ENCODE measurements at regions of chr9 and their contacts with region 1.

Region 1: DNA sequence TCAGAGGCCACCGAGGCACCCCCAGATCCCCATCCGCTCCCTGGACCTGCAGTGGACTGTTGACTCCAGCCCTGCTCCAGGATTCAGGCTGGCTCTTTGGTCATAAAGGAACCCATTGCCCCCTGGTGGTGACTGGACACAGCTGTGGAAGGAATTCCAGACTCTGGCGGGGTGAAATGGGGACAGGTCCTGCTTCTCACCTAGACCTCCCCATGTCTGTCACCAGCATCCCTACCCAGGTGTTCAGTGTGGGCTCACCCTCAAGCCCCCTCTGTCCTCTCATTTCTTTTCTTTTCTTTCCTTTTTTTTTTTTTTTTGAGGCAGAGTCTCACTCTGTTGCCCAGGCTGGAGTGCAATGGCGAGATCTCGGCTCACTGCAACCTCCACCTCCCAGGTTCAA is 25.5 kb upstream of the STXBP1 start:
- DNase-seq: no peak
- H3K4me3 ChIP-seq: no peak overlapping the region
- H3K27ac ChIP-seq: peak overlapping the region in 2 of 4 donors; percentile 98 to 99
- H3K4me1 ChIP-seq: peaks cover 9 to 62% (median 11%) of the 10 kb centered on the region in 3 donors
- H3K27me3 ChIP-seq: no peaks in the 10 kb centered on the region
- CTCF ChIP-seq: peak; percentile 73 to 94 (median 90)
- POLR2A ChIP-seq: no peak

Region 2: GRCh38 chr9:127503947-127504782 is 82.4 kb before region 1 on chr9:
- intact Hi-C with region 1: loop called (anchors 5 kb)
- DNase-seq: peak; percentile 32
- H3K4me3 ChIP-seq: no peak overlapping the region
- H3K27ac ChIP-seq: peak overlapping the region; percentile 20 to 64 (median 57)
- H3K4me1 ChIP-seq: peaks cover 12 to 49% (median 17%) of the 10 kb centered on the region in 3 donors
- H3K27me3 ChIP-seq: no peaks in the 10 kb centered on the region
- CTCF ChIP-seq: peak; percentile 57 to 89 (median 87)
- POLR2A ChIP-seq: no peak

Region 3: GRCh38 chr9:127525401-127526187 is 60.9 kb before region 1 on chr9:
- intact Hi-C with region 1: no loop called
- DNase-seq: no peak
- H3K4me3 ChIP-seq: peak overlapping the region in 1 of 4 donors; percentile 4
- H3K27ac ChIP-seq: peak overlapping the region in 2 of 4 donors; percentile 53 to 86
- H3K4me1 ChIP-seq: peaks cover 19 to 91% (median 35%) of the 10 kb centered on the region in 3 donors
- H3K27me3 ChIP-seq: no peaks in the 10 kb centered on the region
- CTCF ChIP-seq: peak in 5 of 6 experiments; percentile 49 to 78 (median 58)
- POLR2A ChIP-seq: no peak

Region 4: GRCh38 chr9:127541877-127542276 is 44.7 kb before region 1 on chr9:
- intact Hi-C with region 1: loop called (anchors 5 kb)
- DNase-seq: no peak
- H3K4me3 ChIP-seq: peak overlapping the region in 3 of 4 donors; percentile 13 to 31 (median 19)
- H3K27ac ChIP-seq: peak overlapping the region; percentile 84 to 93 (median 92)
- H3K4me1 ChIP-seq: peaks cover 95 to 100% (median 95%) of the 10 kb centered on the region in 3 donors
- H3K27me3 ChIP-seq: no peaks in the 10 kb centered on the region
- CTCF ChIP-seq: no peak
- POLR2A ChIP-seq: no peak

Region 5: GRCh38 chr9:127921557-127922120 is 335.1 kb after region 1 on chr9:
- intact Hi-C with region 1: loop called (anchors 10 kb)
- DNase-seq: no peak
- H3K4me3 ChIP-seq: peak overlapping the region in 2 of 4 donors; percentile 25 to 51
- H3K27ac ChIP-seq: no peak overlapping the region
- H3K4me1 ChIP-seq: peaks cover 37 to 59% (median 38%) of the 10 kb centered on the region in 3 donors
- H3K27me3 ChIP-seq: peaks cover 0 to 26% (median 0%) of the 10 kb centered on the region in 4 donors
- CTCF ChIP-seq: peak; percentile 88 to 98 (median 96)
- POLR2A ChIP-seq: no peak

Measured in esophagus squamous epithelium (tissue), 5 donors.